ENCODE measurements at regions of chr1 and their contacts with region 1.

Region 1: GRCh38 chr1:39204441-39205081 is at the start of gene MACF1:
- DNase-seq: peak in 1 of 5 donors; percentile 21
- H3K4me3 ChIP-seq: peak within 1 kb of the TSS; percentile 69
- H3K4me3 Mint-ChIP-seq: peak within 1 kb of the TSS; percentile 90 to 96 (median 93)
- H3K27ac ChIP-seq: peak within 1 kb of the TSS; percentile 69
- H3K27ac Mint-ChIP-seq: peak within 1 kb of the TSS; percentile 90 to 99 (median 94)
- H3K4me1 ChIP-seq: peaks cover 30% of the 10 kb centered on the region
- H3K4me1 Mint-ChIP-seq: peaks cover 49 to 73% (median 67%) of the 10 kb centered on the region in 3 donors
- H3K27me3 ChIP-seq: no peaks in the 10 kb centered on the region
- H3K27me3 Mint-ChIP-seq: no peaks in the 10 kb centered on the region
- total RNA-seq, gene MACF1: 151 to 154 TPM

Region 2: DNA sequence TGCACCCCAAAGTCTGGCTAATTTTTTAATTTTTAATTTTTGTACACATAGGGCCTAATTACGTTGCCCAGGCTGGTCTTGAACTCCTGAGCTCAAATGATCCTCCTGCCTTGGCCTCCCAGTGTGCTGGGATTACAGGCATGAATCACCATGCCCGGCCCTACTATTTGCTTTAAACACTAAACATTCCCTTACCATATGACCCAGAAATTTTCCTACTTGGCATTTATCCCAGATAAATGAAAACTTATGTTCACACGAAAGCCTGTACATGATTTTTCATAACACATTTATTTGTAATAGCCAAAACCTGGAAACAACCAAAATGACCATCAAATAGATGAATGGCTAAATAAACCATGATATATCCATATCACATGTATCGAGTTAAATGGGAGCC is 142.6 kb before region 1 on chr1:
- CTCF ChIA-PET with region 1: no interaction called
- POLR2A ChIA-PET with region 1: no interaction called
- DNase-seq: no peak
- H3K4me3 ChIP-seq: no peak overlapping the region
- H3K4me3 Mint-ChIP-seq: no peak overlapping the region
- H3K27ac ChIP-seq: no peak overlapping the region
- H3K27ac Mint-ChIP-seq: no peak overlapping the region
- H3K4me1 ChIP-seq: no peaks in the 10 kb centered on the region
- H3K4me1 Mint-ChIP-seq: no peaks in the 10 kb centered on the region
- H3K27me3 ChIP-seq: no peaks in the 10 kb centered on the region
- H3K27me3 Mint-ChIP-seq: no peaks in the 10 kb centered on the region

Region 3: DNA sequence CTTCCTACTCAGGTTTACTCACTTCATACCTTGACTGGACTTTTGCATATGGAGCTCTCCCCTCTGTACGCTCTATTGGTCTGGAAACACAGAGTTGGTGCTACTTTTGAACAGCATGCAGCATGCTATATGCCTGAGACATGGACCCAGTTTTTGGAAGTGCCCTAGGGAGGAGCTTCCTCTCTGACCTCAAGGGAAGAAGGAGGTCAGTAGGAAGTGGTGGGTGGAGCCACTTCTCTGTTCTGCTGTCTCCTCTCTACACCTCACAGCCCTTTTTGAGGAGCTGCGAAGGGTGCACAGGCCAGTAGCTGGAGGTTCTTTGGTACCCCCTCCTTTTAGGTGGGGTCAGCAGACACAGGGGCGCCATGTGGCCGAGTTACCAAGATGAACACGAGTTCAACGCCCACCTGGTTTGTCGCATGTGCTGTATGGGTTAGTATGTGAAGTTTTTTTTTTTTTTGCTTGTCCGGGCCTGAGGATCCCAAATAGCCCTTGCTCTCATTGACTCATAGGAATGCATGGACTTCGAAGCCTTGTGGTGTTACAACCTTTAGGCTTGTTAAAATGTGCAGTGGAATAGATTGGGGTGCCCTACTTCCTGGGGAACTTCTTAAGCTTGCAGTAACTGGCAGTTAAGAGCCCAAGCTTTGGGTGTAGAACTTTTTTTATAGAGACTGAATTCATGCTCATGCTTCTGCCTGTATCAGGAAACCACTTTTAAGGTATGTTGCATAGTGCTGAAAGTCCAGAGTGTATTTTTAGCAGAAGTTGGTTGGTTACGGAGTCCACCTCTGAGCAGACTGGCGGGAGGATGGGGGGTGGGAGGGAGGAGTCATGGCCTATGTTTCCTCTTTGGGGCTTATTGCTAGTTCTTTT is 10.7 kb after region 1 on chr1:
- CTCF ChIA-PET with region 1: interaction called, 24 read pairs
- POLR2A ChIA-PET with region 1: interaction called, 15 read pairs
- DNase-seq: peak in 4 of 5 donors; percentile 30 to 58 (median 40)
- H3K4me3 ChIP-seq: peak overlapping the region; percentile 54
- H3K4me3 Mint-ChIP-seq: peak overlapping the region; percentile 84 to 96 (median 90)
- H3K27ac ChIP-seq: peak overlapping the region; percentile 62
- H3K27ac Mint-ChIP-seq: peak overlapping the region; percentile 76 to 96 (median 92)
- H3K4me1 ChIP-seq: peaks cover 46% of the 10 kb centered on the region
- H3K4me1 Mint-ChIP-seq: peaks cover 53 to 70% (median 69%) of the 10 kb centered on the region in 3 donors
- H3K27me3 ChIP-seq: no peaks in the 10 kb centered on the region
- H3K27me3 Mint-ChIP-seq: no peaks in the 10 kb centered on the region

Region 4: GRCh38 chr1:39269791-39270342 is 65.3 kb after region 1 on chr1:
- CTCF ChIA-PET with region 1: no interaction called
- POLR2A ChIA-PET with region 1: no interaction called
- DNase-seq: no peak
- H3K4me3 ChIP-seq: no peak overlapping the region
- H3K4me3 Mint-ChIP-seq: peak overlapping the region in 4 of 7 donors; percentile 4 to 46 (median 10)
- H3K27ac ChIP-seq: no peak overlapping the region
- H3K27ac Mint-ChIP-seq: peak overlapping the region in 7 of 8 donors; percentile 14 to 92 (median 73)
- H3K4me1 ChIP-seq: peaks cover 56% of the 10 kb centered on the region
- H3K4me1 Mint-ChIP-seq: peaks cover 80 to 90% (median 88%) of the 10 kb centered on the region in 3 donors
- H3K27me3 ChIP-seq: no peaks in the 10 kb centered on the region
- H3K27me3 Mint-ChIP-seq: no peaks in the 10 kb centered on the region

Region 5: GRCh38 chr1:39354572-39354971 is 150.0 kb after region 1 on chr1:
- CTCF ChIA-PET with region 1: no interaction called
- POLR2A ChIA-PET with region 1: no interaction called
- DNase-seq: no peak
- H3K4me3 ChIP-seq: no peak overlapping the region
- H3K4me3 Mint-ChIP-seq: no peak overlapping the region
- H3K27ac ChIP-seq: no peak overlapping the region
- H3K27ac Mint-ChIP-seq: no peak overlapping the region
- H3K4me1 ChIP-seq: no peaks in the 10 kb centered on the region
- H3K4me1 Mint-ChIP-seq: peaks cover 0 to 4% (median 0%) of the 10 kb centered on the region in 3 donors
- H3K27me3 ChIP-seq: no peaks in the 10 kb centered on the region
- H3K27me3 Mint-ChIP-seq: no peaks in the 10 kb centered on the region

Measured in CD8-positive, alpha-beta memory T cell (primary cell).